Heart left ventricle (tissue), 16 donors: ENCODE measurements at regions of chr18 and their contacts with region 1.

Region 1: DNA sequence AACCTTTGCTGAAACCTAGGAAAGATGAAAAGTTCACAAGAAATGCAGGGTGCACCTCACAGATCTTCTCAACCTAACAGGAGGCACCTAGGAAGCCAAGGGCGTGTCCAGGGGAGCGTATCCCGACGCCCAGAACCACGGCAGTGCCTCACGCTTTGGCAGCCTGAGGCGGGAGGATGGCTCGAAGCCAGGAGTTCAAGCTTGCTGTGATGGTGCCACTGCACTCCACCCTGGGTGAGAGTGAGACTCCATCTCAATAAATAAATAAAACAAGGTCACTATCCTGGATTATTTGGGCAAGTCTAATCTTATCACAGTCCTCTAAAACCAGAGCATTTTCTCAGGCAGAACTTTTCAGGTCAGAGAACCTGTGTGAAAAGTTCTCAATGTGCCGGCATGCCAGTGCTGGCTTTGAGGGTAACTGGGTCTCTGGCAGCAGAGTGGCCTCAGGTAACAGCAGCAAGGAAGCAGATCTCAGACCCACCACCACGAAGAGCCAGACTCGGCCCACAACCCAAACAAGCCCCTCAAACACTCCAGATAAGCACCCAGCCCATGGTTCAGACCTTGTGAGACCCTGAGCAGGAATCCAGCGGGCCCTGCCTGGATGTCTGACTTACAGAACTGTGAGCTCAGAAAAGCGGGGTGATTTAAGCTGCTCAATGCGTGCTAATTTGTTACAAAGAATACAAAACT is 11.7 kb downstream of the HSBP1L1 start:
- DNase-seq: peak in 3 of 5 donors; percentile 56 to 68 (median 57)
- ATAC-seq: peak in 3 of 4 donors; percentile 69 to 75 (median 71)
- H3K4me3 ChIP-seq: no peak overlapping the region
- H3K27ac ChIP-seq: no peak overlapping the region
- H3K4me1 ChIP-seq: peaks cover 0 to 13% (median 2%) of the 10 kb centered on the region in 12 donors
- H3K27me3 ChIP-seq: no peaks in the 10 kb centered on the region
- CTCF ChIP-seq: no peak
- POLR2A ChIP-seq: no peak

Region 2: GRCh38 chr18:79790996-79791972 is 184.8 kb before region 1 on chr18:
- intact Hi-C with region 1: loop called in 1 of 10 experiments (anchors 10 kb)
- DNase-seq: peak in 4 of 5 donors; percentile 35 to 62 (median 50)
- ATAC-seq: peak; percentile 59 to 82 (median 73)
- H3K4me3 ChIP-seq: peak overlapping the region in 5 of 12 donors; percentile 1 to 18 (median 7)
- H3K27ac ChIP-seq: peak overlapping the region in 1 of 12 donors; percentile 63
- H3K4me1 ChIP-seq: peaks cover 0 to 37% (median 8%) of the 10 kb centered on the region in 12 donors
- H3K27me3 ChIP-seq: peaks cover 25 to 65% (median 38%) of the 10 kb centered on the region in 9 donors
- CTCF ChIP-seq: no peak
- POLR2A ChIP-seq: no peak